ENCODE measurements at regions of chr2 and their contacts with region 1.

Region 1: DNA sequence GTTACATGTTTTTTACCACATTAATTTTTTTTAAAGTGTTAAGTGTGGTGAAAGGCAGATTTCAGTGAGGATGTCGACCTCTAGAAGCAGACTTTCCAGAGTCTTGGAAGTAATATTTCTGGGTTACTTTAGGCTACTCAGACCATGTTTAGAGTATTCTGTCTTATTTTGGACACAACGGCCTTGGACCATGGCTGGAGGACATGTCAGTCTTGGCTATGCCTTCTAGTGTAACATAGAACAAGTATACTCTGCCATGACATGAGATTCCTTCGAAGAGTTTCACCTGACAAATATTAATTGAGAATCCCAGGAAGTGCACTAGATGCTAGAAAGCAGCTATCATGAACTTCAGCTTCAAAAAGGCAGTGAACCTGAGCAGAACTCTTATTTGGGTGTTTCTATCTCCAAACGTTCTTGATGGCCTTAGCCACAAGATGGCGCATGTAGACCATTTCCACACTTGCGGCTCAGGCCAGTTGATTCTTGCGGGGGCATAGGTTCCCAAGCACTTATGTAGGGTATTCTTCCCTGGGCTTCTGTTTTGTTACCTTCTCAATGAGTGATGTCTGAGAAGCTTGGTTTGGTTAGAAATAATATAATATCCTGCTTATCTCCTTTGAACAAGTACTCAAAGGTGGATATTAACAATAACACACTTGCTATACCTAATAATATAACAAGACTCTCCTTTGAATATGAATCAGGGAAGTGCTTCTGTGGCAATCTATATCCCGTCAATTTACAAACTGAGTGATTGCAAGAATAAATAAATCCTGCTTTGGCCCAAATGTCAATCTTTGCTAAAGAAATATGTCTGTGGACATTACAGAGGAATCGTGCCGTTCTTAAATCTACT is 62.0 kb downstream of the CACNB4 start:
- DNase-seq: peak; percentile 41
- H3K4me3 ChIP-seq: no peak overlapping the region
- H3K27ac ChIP-seq: no peak overlapping the region
- H3K4me1 ChIP-seq: peaks cover 26% of the 10 kb centered on the region
- H3K27me3 ChIP-seq: no peaks in the 10 kb centered on the region
- CTCF ChIP-seq: peak; percentile 85

Region 2: GRCh38 chr2:151979694-151980093 is 57.1 kb before region 1 on chr2:
- intact Hi-C with region 1: no loop called
- DNase-seq: no peak
- H3K4me3 ChIP-seq: no peak overlapping the region
- H3K27ac ChIP-seq: no peak overlapping the region
- H3K4me1 ChIP-seq: no peaks in the 10 kb centered on the region
- H3K27me3 ChIP-seq: no peaks in the 10 kb centered on the region
- CTCF ChIP-seq: no peak

Region 3: DNA sequence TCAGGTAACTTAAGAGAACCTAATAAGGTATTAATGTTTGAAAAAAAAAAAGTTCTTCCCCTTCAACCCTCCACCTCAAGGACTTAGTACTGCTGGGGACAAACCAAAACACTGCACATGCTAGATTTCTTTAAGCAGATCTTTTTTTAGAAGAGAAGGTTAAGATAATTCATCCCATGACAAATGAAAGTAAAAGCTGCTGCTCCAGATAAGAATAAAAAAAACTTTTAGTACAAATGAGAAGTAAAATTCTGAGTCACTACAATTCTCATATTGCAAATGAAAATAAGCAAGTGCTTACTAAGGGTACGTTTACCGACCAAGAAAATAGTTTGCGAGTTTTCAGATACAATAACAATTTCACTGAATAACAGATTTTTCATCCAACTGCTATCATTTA is 129.8 kb after region 1 on chr2:
- intact Hi-C with region 1: loop called (anchors 10 kb)
- DNase-seq: no peak
- H3K4me3 ChIP-seq: peak overlapping the region; percentile 2
- H3K27ac ChIP-seq: peak overlapping the region; percentile 3
- H3K4me1 ChIP-seq: peaks cover 68% of the 10 kb centered on the region
- H3K27me3 ChIP-seq: no peaks in the 10 kb centered on the region
- CTCF ChIP-seq: no peak

Region 4: GRCh38 chr2:152627351-152627957 is 590.6 kb after region 1 on chr2:
- intact Hi-C with region 1: loop called (anchors 10 kb)
- DNase-seq: no peak
- H3K4me3 ChIP-seq: no peak overlapping the region
- H3K27ac ChIP-seq: no peak overlapping the region
- H3K4me1 ChIP-seq: no peaks in the 10 kb centered on the region
- H3K27me3 ChIP-seq: no peaks in the 10 kb centered on the region
- CTCF ChIP-seq: peak; percentile 73